Caco-2 (cell line): ENCODE measurements at regions of chr2 and their contacts with region 1.

Region 1: DNA sequence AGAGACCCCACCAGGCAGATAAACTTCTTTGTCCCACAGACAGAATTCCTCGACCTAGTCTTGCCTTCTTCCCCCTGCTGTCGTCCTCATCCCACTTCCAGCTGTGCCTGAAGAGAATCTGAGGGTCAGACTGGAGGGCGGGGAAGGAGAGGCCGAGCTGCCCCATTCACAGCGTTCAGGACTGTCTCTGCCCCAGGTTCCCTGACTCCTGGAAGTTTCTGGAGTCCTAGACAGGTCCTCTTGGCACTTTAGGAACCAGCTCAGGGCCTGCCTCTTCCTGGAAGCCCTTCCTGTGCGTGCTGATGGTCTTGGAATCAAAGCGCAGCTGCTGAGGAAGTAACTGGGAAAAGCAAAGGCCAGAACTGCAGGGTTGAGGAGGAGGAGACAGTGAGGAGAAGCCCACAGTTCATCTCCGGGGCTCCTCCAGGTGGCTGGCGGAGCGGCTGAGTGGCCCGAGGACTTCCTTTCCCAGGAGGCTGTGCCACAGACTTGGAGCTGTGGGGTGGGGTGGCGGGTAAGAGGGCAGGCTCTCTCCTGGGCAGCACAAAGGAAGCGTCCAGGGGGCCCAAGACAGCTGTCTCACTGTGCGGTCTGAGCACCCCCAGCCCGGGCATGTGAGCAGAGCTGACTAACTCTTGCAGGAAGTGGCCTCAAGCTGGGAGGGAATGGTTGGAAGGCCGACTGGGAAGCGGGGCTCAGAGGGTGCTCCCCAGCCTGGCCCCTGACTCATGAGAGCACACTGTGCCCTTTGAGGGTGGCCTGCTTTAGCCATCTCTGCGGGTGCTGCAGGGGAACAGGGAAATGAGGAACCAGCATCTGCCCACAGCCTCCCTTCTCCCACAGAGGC is 39.5 kb downstream of the SDC1 start:
- DNase-seq: no peak
- H3K4me3 ChIP-seq: no peak overlapping the region
- H3K4me3 Mint-ChIP-seq: no peak overlapping the region
- H3K27ac Mint-ChIP-seq: peak overlapping the region; percentile 83
- H3K4me1 ChIP-seq: peaks cover 42% of the 10 kb centered on the region
- H3K4me1 Mint-ChIP-seq: peaks cover 25% of the 10 kb centered on the region
- H3K27me3 ChIP-seq: no peaks in the 10 kb centered on the region
- H3K27me3 Mint-ChIP-seq: no peaks in the 10 kb centered on the region
- CTCF ChIP-seq: no peak

Region 2: DNA sequence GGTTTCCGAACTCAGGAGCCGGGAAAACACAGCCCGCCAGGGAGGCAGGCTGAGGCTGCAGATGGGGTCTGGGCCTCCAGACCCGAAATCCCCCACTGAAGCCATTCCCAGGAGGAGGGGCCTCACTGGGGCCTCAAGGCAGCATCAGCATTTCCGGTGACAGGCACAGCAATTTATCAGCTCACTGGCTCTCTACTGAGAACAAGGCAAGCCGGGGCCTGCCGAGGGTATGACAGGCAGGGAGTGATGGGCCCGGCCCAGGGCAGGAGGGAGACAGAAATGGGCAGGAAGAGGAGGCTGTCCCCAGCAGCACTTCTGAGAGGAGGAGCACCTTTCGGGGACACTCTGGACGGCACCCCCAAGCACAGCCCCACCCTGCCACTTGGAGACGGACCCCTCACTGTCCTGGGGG is 27.1 kb after region 1 on chr2:
- CTCF ChIA-PET with region 1: no interaction called
- POLR2A ChIA-PET with region 1: no interaction called
- intact Hi-C with region 1: loop called (anchors 2 kb)
- DNase-seq: no peak
- H3K4me3 ChIP-seq: no peak overlapping the region
- H3K4me3 Mint-ChIP-seq: no peak overlapping the region
- H3K27ac Mint-ChIP-seq: no peak overlapping the region
- H3K4me1 ChIP-seq: peaks cover 41% of the 10 kb centered on the region
- H3K4me1 Mint-ChIP-seq: peaks cover 22% of the 10 kb centered on the region
- H3K27me3 ChIP-seq: no peaks in the 10 kb centered on the region
- H3K27me3 Mint-ChIP-seq: no peaks in the 10 kb centered on the region
- CTCF ChIP-seq: no peak